Activated T-helper 1 cell treated with anti-CD3 and anti-CD28 coated beads, Interleukin-12 subunit alpha, Interleukin-12 subunit beta, Interleukin-2, Interleukin-4 antibody, amounts not matched to agents 30 ng/mL and 10 ng/mL and 1 ng/mL, durations not matched to agents 14 hours and 24 hours and 36 hours (primary cell): ENCODE measurements at regions of chr1 and their contacts with region 1.

Region 1: DNA sequence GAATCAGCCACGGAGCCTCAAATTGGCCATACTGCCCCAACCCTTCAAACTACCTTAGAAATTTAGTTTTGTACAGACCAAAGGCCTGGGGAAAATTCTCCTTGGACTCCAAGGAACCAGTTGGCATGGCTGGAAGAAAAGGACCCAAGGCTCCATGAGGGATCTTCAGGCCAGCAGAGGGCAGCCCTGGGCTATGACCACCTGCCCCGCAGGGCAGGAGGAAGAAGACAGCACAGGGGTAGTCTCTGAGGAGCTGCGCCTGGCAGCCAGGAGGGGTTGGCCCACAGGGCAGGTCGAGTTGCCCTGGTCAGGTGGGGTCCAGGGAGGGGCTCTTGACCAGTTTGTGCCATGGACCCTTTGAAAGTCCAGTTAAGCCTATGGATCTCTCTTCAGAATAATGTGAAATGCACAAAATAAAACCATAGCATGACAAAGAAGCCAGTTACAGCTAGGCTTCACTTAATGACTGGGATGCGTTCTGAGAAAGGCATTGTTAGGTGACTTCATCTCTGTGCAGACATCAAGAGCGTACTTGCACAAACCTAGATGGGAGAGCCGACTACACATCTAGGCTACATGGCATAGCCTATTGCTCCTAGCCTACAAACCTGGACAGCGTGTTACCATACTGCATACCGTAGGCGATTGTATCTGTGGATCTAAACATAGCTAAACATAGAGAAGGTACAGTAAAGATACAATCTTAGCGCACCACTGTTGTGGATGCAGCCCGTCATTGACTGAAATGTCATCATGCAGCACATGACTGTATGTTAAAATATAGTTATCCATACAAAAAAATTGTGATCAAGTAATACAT is 26.1 kb downstream of the CACNA1S start:
- DNase-seq: no peak
- H3K4me3 Mint-ChIP-seq: no peak overlapping the region
- H3K27ac Mint-ChIP-seq: no peak overlapping the region
- H3K4me1 Mint-ChIP-seq: no peaks in the 10 kb centered on the region
- H3K27me3 Mint-ChIP-seq: peaks cover 12% of the 10 kb centered on the region

Region 2: GRCh38 chr1:201108614-201109013 is 22.5 kb after region 1 on chr1:
- intact Hi-C with region 1: no loop called
- DNase-seq: no peak
- H3K4me3 Mint-ChIP-seq: no peak overlapping the region
- H3K27ac Mint-ChIP-seq: no peak overlapping the region
- H3K4me1 Mint-ChIP-seq: no peaks in the 10 kb centered on the region
- H3K27me3 Mint-ChIP-seq: peaks cover 9% of the 10 kb centered on the region

Region 3: GRCh38 chr1:201119206-201120197 is 33.4 kb after region 1 on chr1:
- intact Hi-C with region 1: loop called (anchors 1 kb)
- DNase-seq: no peak
- H3K4me3 Mint-ChIP-seq: no peak overlapping the region
- H3K27ac Mint-ChIP-seq: no peak overlapping the region
- H3K4me1 Mint-ChIP-seq: no peaks in the 10 kb centered on the region
- H3K27me3 Mint-ChIP-seq: peaks cover 49% of the 10 kb centered on the region

Region 4: GRCh38 chr1:202304375-202304774 is 1218.2 kb after region 1 on chr1:
- intact Hi-C with region 1: loop called (anchors 5 kb)
- DNase-seq: no peak
- H3K4me3 Mint-ChIP-seq: no peak overlapping the region
- H3K27ac Mint-ChIP-seq: no peak overlapping the region
- H3K4me1 Mint-ChIP-seq: no peaks in the 10 kb centered on the region
- H3K27me3 Mint-ChIP-seq: peaks cover 2% of the 10 kb centered on the region